ENCODE measurements at regions of chr11 and their contacts with region 1.

Region 1: GRCh38 chr11:38089726-38090125 is 1491.7 kb upstream of the RAG2 start:
- DNase-seq: no peak
- ATAC-seq: no peak
- H3K4me3 ChIP-seq: no peak overlapping the region
- H3K27ac ChIP-seq: no peak overlapping the region
- H3K4me1 ChIP-seq: no peaks in the 10 kb centered on the region
- H3K27me3 ChIP-seq: no peaks in the 10 kb centered on the region
- CTCF ChIP-seq: no peak

Region 2: GRCh38 chr11:38046571-38047135 is 43.1 kb before region 1 on chr11:
- CTCF ChIA-PET with region 1: no interaction called
- POLR2A ChIA-PET with region 1: no interaction called
- in situ Hi-C with region 1: no loop called
- intact Hi-C with region 1: loop called (anchors 5 kb)
- DNase-seq: no peak
- ATAC-seq: no peak
- H3K4me3 ChIP-seq: no peak overlapping the region
- H3K27ac ChIP-seq: no peak overlapping the region
- H3K4me1 ChIP-seq: no peaks in the 10 kb centered on the region
- H3K27me3 ChIP-seq: no peaks in the 10 kb centered on the region
- CTCF ChIP-seq: no peak

Measured in Panc1 (cell line).